ENCODE measurements at regions of chr11 and their contacts with region 1.

Region 1: DNA sequence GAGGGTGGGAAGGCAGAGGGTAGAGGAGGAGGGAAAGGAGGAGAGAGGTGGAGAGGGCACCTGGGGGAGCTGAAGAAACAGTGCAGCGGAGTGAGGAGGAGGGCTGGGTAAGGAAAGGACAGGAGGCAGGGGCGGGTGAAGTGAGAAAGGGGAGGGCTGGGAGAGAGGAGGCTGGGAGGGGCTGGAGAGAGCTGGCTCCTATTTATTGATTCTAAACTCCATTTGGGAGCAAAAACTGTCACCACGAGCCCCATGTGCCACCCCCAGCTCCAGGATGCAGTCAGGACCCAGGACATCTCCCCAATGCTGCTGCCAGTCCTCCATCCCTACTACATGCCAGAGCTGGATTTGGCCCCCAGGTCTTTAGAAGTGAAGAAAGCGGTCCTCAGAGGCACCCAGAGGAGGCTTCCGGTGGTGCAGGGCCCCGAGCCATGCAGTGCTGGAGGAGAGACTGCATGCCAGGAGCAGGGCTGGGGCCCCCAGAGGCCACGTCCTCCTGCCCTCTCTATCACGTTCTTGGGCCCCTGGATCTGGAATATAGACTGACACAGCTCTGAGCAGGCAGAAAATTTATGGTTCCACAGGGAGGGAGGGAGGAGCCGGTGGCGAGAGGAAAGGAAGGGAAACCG is 53.7 kb downstream of the SLC22A12 start:
- DNase-seq: peak; percentile 23
- ATAC-seq: peak; percentile 61
- H3K4me3 Mint-ChIP-seq: no peak overlapping the region
- H3K27ac Mint-ChIP-seq: no peak overlapping the region
- H3K4me1 Mint-ChIP-seq: peaks cover 1% of the 10 kb centered on the region
- H3K27me3 Mint-ChIP-seq: peaks cover 26% of the 10 kb centered on the region
- CTCF ChIP-seq: peak; percentile 18

Region 2: GRCh38 chr11:64489831-64490441 is 154.8 kb before region 1 on chr11:
- CTCF ChIA-PET with region 1: interaction called, 3 read pairs
- POLR2A ChIA-PET with region 1: no interaction called
- intact Hi-C with region 1: loop called (anchors 5 kb)
- DNase-seq: peak; percentile 54
- ATAC-seq: peak; percentile 74
- H3K4me3 Mint-ChIP-seq: no peak overlapping the region
- H3K27ac Mint-ChIP-seq: no peak overlapping the region
- H3K4me1 Mint-ChIP-seq: peaks cover 3% of the 10 kb centered on the region
- H3K27me3 Mint-ChIP-seq: peaks cover 28% of the 10 kb centered on the region
- CTCF ChIP-seq: peak; percentile 83

Region 3: DNA sequence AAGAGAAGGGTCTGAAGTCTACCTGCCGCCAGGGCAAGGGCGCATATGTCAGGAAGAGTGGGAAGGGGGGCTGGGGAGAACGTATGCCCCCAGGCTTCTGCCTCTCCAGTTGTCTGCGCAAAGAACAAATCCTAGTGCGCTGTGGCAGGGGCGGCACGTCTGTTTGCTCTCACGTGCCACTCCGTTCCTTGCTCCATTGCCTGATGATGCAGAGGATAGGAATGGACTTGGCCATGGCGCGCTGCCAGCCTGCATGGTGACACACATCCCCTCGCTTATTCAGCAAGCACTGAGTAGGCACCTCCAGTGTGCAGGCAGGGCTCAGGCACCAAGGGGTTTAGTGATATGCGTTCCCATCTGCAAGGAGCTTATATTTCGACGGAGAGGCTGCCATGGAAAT is 99.2 kb before region 1 on chr11:
- CTCF ChIA-PET with region 1: no interaction called
- POLR2A ChIA-PET with region 1: no interaction called
- intact Hi-C with region 1: no loop called
- DNase-seq: no peak
- ATAC-seq: no peak
- H3K4me3 Mint-ChIP-seq: no peak overlapping the region
- H3K27ac Mint-ChIP-seq: no peak overlapping the region
- H3K4me1 Mint-ChIP-seq: no peaks in the 10 kb centered on the region
- H3K27me3 Mint-ChIP-seq: peaks cover 1% of the 10 kb centered on the region
- CTCF ChIP-seq: no peak

Region 4: DNA sequence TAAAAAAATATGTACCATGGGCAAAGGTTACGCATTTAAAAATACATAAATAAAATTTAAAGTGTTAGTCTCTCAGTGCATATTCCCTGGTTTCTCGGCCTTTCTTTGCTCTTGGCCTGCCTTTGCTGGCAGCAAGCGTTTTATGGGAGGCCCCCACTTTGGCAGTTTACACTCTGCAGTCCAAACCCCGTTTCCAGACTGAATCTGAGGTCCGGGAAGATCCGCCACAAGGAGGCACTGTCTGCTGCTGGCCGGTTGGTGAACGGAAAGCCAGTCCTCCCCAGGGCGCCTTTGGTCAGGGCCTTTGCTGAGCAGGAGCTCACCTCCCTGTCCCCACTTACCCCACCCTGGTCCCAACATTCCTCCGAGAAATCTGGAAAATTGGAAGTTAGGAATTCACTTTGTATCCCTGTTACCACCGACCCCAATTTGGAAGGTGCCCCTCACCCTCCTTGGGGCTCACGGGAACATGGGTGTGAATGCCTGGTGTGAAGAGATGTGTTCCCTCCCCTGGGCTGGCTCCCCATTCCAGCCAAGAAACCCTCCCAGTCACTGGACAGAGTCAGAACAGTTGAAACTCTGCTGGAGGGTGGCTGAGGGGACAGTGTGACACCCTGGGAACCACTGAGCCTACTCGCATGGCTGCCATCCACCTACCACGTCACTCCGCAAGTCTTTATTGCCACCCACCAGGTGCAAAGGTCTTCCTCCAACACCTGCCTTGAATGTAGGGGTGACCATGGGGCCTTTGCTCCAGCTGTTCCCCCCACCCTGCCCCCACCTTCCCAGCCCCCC is 143.0 kb after region 1 on chr11:
- CTCF ChIA-PET with region 1: no interaction called
- POLR2A ChIA-PET with region 1: no interaction called
- intact Hi-C with region 1: no loop called
- DNase-seq: peak; percentile 78
- ATAC-seq: peak; percentile 78
- H3K4me3 Mint-ChIP-seq: no peak overlapping the region
- H3K27ac Mint-ChIP-seq: peak overlapping the region; percentile 49
- H3K4me1 Mint-ChIP-seq: peaks cover 4% of the 10 kb centered on the region
- H3K27me3 Mint-ChIP-seq: no peaks in the 10 kb centered on the region
- CTCF ChIP-seq: peak; percentile 66